ENCODE measurements at regions of chr15 and their contacts with region 1.

Region 1: DNA sequence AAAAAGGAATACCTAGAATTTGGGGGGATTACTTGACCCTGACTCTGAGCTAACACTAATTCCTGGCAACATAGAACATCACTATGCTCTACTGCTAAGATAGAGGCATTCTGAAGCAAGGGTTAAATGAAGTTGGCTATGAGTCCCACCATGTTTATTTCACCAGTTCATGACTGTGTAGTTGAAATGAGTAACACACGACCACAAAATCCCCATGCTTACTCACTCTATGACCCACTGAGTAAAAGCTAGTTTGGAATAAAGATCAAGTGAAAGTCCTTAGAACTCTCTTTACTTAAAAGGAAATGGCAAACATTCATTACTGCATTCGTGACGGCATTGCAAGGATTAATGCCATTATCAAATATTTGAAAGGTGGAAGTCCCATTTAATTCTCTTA is 47.4 kb downstream of the MRPL46 start:
- DNase-seq: no peak
- H3K4me3 Mint-ChIP-seq: no peak overlapping the region
- H3K27ac Mint-ChIP-seq: no peak overlapping the region
- H3K4me1 Mint-ChIP-seq: peaks cover 16% of the 10 kb centered on the region
- H3K27me3 Mint-ChIP-seq: peaks cover 16% of the 10 kb centered on the region

Region 2: GRCh38 chr15:88258093-88258641 is 161.7 kb before region 1 on chr15:
- intact Hi-C with region 1: no loop called
- DNase-seq: no peak
- H3K4me3 Mint-ChIP-seq: peak overlapping the region; percentile 76
- H3K27ac Mint-ChIP-seq: no peak overlapping the region
- H3K4me1 Mint-ChIP-seq: peaks cover 12% of the 10 kb centered on the region
- H3K27me3 Mint-ChIP-seq: peaks cover 67% of the 10 kb centered on the region

Region 3: DNA sequence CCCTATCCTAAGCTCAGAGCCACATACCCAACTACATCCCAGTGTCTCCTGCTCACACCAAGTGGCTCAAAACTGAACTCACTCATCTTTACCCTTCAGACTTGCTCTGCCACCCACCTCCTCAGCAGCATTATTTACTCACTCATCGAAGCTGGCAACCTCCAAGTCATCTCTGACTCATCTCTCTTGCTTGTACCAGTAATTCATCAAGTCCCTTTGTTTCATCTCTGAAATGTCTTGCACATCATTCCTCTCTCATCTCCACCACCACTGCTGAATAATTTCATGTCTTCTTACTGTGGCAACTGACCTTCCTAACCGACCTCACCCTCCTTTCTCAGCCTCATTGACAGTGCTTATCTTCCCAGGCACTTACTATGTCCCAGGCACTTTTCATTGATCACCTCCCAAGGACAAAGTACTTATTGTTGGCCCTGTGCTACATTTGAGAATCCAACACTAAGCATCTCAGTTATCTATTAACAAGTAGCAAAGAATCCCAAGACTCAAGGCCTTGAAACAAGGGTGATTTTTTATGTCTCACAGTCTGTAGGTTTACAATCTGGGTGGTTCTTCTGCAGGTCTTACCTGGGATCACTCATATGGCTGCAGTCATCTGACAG is 34.6 kb before region 1 on chr15:
- intact Hi-C with region 1: loop called (anchors 2 kb)
- DNase-seq: no peak
- H3K4me3 Mint-ChIP-seq: no peak overlapping the region
- H3K27ac Mint-ChIP-seq: no peak overlapping the region
- H3K4me1 Mint-ChIP-seq: peaks cover 5% of the 10 kb centered on the region
- H3K27me3 Mint-ChIP-seq: no peaks in the 10 kb centered on the region

Region 4: GRCh38 chr15:88529021-88529630 is 109.3 kb after region 1 on chr15:
- intact Hi-C with region 1: no loop called
- DNase-seq: no peak
- H3K4me3 Mint-ChIP-seq: no peak overlapping the region
- H3K27ac Mint-ChIP-seq: no peak overlapping the region
- H3K4me1 Mint-ChIP-seq: no peaks in the 10 kb centered on the region
- H3K27me3 Mint-ChIP-seq: no peaks in the 10 kb centered on the region

Region 5: GRCh38 chr15:88744548-88745020 is 324.8 kb after region 1 on chr15:
- intact Hi-C with region 1: no loop called
- DNase-seq: no peak
- H3K4me3 Mint-ChIP-seq: no peak overlapping the region
- H3K27ac Mint-ChIP-seq: no peak overlapping the region
- H3K4me1 Mint-ChIP-seq: no peaks in the 10 kb centered on the region
- H3K27me3 Mint-ChIP-seq: peaks cover 16% of the 10 kb centered on the region

Measured in activated T-helper 2 cell treated with anti-CD3 and anti-CD28 coated beads, Interferon-gamma antibody, Interleukin-2, Interleukin-4, amounts not matched to agents 10 μg/mL and 5 μg/mL and 100 μg/mL, durations not matched to agents 14 hours and 24 hours and 36 hours (primary cell).